SK-N-SH (cell line): ENCODE measurements at regions of chr2 and their contacts with region 1.

Region 1: DNA sequence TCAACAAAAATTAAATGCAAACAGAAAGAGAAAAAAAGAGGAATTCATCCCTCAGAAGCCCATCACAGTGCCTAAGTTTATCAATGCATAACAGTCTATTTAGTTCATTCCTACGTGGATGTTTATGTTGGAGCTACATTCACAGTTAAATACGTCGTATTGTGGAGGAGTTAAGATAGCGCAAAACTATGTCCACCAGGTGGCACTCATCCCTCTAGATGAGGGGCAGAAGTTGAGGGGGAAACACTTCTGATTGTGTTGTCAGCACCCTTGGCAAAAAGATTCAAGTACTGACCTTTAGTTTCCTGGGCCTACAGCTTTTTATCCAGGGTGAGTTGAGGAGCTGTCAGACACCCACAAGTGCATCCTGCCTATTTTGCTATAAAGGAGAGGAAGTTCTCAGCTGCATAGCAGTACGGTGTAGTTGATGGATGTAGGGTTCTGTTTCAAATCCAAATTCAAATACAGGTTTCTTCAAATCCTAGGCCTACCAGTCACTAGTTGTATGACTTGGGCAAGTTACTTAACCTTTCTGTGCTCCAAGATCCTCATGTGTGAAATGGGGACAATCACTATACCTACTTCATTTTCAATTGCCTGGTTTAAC is 26.8 kb upstream of the MYO1B start:
- DNase-seq: peak; percentile 48
- H3K4me3 ChIP-seq: no peak overlapping the region
- H3K27ac ChIP-seq: no peak overlapping the region
- H3K4me1 ChIP-seq: no peaks in the 10 kb centered on the region; a peak in 3 of 4 replicates
- H3K27me3 ChIP-seq: no peaks in the 10 kb centered on the region
- CTCF ChIP-seq: peak; percentile 76
- EP300 ChIP-seq: no peak
- RAD21 ChIP-seq: peak; percentile 81

Region 2: DNA sequence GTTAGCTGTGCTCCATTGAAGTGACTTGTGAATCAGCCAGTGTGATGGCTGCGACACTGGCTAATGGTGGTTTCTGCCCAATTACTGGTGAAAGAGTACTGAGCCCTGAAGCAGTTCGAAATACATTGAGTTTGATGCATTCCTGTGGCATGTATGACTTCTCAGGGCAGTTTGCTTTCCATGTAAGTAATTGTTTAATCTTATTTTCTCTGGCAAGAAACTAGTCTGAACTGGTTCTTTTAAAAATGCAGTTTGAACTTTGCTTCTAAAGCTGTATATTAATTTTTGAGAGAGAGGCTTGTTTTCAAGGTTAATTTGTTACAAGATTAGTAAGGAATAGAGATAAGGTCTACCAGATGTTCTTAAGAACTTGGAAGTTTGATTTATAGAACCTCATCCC is 291.1 kb before region 1 on chr2:
- CTCF ChIA-PET with region 1: no interaction called
- POLR2A ChIA-PET with region 1: no interaction called
- DNase-seq: no peak
- H3K4me3 ChIP-seq: no peak overlapping the region
- H3K27ac ChIP-seq: peak overlapping the region; percentile 73
- H3K4me1 ChIP-seq: peaks cover 2 to 25% of the 10 kb centered on the region in 2 experiments
- H3K27me3 ChIP-seq: no peaks in the 10 kb centered on the region
- CTCF ChIP-seq: no peak
- EP300 ChIP-seq: no peak
- RAD21 ChIP-seq: no peak

Region 3: GRCh38 chr2:191195021-191195420 is 23.4 kb before region 1 on chr2:
- CTCF ChIA-PET with region 1: interaction called, 28 read pairs
- POLR2A ChIA-PET with region 1: no interaction called
- DNase-seq: no peak
- H3K4me3 ChIP-seq: no peak overlapping the region
- H3K27ac ChIP-seq: no peak overlapping the region
- H3K4me1 ChIP-seq: no peaks in the 10 kb centered on the region
- H3K27me3 ChIP-seq: no peaks in the 10 kb centered on the region
- CTCF ChIP-seq: no peak
- EP300 ChIP-seq: no peak
- RAD21 ChIP-seq: no peak

Region 4: DNA sequence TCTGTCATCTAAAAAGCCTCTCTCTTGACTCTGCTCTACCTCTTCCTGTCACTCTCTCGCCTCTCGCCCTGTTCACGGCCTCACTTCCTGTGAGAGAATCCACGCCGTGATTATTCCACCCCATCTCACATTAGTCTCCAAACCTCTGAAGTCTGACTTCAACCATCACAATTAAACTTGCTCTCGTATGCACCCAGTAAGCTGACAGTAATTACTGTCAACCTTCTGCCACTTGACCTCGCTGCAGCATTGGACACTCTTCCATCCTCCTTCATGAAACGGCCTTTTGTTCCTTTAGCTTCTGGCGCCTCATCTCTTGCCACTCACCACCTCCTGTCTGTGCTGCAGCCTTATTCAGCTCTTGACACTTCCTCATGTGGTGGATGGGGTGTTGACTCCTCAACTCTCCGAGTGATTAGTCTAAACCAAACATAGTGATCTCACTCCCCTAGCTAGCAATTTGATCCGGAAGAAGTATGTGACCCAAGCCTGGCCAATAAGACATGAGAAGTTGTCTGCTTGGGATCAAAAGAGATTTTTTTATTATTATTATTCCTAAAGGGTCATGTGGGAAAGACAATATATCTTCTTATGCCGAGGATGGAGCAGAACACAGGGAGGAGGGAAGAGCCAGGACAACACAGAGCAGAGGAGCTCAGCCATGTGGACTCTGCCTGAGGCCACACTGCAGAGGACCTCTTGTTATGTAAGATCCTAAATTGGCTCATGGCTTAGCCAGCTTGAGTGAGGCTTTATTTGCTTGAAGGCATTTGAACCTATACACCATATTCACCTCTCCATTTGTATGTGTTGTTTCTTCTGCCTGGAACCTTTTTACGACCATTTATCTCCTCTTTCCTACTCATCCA is 11.5 kb before region 1 on chr2:
- CTCF ChIA-PET with region 1: interaction called, 28 read pairs
- POLR2A ChIA-PET with region 1: no interaction called
- DNase-seq: no peak
- H3K4me3 ChIP-seq: no peak overlapping the region
- H3K27ac ChIP-seq: no peak overlapping the region
- H3K4me1 ChIP-seq: 0 out of 4 replicates have a peak, but pooled peaks cover 0 to 11% of the 10 kb centered on the region in 2 experiments
- H3K27me3 ChIP-seq: no peaks in the 10 kb centered on the region
- CTCF ChIP-seq: no peak
- EP300 ChIP-seq: no peak
- RAD21 ChIP-seq: no peak

Region 5: GRCh38 chr2:191228861-191229260 is 10.5 kb after region 1 on chr2:
- CTCF ChIA-PET with region 1: interaction called, 16 read pairs
- POLR2A ChIA-PET with region 1: no interaction called
- DNase-seq: no peak
- H3K4me3 ChIP-seq: no peak overlapping the region
- H3K27ac ChIP-seq: no peak overlapping the region
- H3K4me1 ChIP-seq: peaks cover 4 to 6% of the 10 kb centered on the region in 2 experiments
- H3K27me3 ChIP-seq: no peaks in the 10 kb centered on the region
- CTCF ChIP-seq: no peak
- EP300 ChIP-seq: no peak
- RAD21 ChIP-seq: no peak

Region 6: GRCh38 chr2:191291471-191291870 is 73.1 kb after region 1 on chr2:
- CTCF ChIA-PET with region 1: no interaction called
- POLR2A ChIA-PET with region 1: no interaction called
- DNase-seq: no peak
- H3K4me3 ChIP-seq: no peak overlapping the region
- H3K27ac ChIP-seq: no peak overlapping the region
- H3K4me1 ChIP-seq: peaks cover 0 to 2% of the 10 kb centered on the region in 2 experiments; a peak in 2 of 4 replicates
- H3K27me3 ChIP-seq: no peaks in the 10 kb centered on the region
- CTCF ChIP-seq: no peak
- EP300 ChIP-seq: no peak
- RAD21 ChIP-seq: no peak